ENCODE measurements at regions of chr17 and their contacts with region 1.

Region 1: GRCh38 chr17:39872751-39873150 is 4.7 kb downstream of the ZPBP2 start:
- DNase-seq: peak; percentile 5
- H3K4me3 ChIP-seq: no peak overlapping the region
- CTCF ChIP-seq: no peak

Region 2: DNA sequence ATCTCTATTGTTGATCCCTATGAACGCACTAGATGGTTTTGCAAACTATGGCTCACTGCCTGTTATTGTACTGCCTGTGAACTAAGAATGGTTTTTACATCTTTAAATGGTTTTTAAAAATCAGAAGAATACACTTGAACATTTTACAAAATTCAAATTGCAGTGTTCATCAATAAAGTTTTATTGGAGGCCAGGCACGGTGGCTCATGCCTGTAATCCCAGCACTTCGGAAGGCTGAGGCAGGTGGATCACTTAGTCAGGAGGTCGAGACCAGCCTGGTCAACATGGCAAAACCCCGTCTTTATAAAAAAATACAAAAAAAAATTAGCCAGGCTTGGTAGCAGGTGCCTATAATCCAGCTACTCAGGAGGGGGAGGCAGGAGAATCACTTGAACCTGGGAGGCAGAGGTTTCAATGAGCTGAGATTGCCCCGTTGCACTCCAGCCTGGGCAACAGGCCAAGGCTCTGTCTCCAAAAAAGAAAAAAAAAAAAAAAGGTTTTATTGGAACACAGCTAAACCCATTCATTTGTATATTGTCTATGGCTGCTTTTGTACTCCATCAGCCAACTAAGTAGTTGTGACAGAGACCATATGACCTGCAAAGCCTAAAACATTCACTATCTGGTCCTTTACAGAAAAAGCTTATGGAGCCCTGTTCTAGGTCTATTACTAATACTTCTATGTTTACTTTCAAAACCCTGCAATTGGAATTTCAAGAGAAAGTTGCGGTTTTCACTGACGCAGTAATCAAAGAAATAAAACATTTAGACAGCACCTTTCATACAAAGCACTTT is 27.5 kb before region 1 on chr17:
- CTCF ChIA-PET with region 1: interaction called, 10 read pairs
- POLR2A ChIA-PET with region 1: no interaction called
- DNase-seq: no peak
- H3K4me3 ChIP-seq: no peak overlapping the region
- CTCF ChIP-seq: no peak

Region 3: DNA sequence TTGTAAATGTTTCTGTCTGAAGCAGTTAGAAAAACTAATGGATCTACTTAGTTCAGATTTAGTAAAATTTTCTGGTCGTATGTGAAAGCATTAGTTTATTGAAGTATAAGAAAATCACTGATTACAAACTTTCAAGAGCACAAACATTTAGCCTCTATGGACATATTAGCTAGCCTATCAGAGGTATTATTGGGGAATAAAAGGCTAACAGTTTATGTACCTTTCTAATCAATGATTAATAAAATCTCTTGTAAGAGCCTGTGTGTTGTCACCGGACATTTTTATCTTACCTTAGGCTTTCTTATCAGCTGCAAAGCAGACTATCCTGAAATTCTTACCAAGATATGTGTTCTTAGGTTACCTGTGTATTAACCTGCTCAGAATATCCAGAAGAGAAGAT is 16.4 kb after region 1 on chr17:
- CTCF ChIA-PET with region 1: interaction called, 24 read pairs
- POLR2A ChIA-PET with region 1: no interaction called
- DNase-seq: no peak
- H3K4me3 ChIP-seq: no peak overlapping the region
- CTCF ChIP-seq: no peak

Region 4: DNA sequence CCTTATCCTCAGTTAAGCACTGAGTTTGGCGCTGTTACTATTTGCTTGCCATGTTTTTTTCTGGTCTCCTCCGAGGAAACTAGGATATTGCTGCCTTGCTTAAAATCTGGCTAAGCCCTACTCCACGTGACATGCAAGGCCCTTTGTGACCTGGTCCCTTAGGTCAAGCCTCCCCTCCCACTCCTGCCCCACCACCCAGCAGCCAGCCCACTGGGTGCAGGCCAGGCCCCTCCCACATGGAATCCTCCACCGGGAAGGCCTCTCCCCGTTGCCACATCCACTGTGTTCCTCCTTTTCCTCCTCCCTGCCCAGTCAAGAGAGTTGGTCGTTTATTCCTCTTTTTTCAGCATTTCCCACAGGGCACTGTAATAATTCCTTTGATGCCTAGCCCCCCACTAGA is 124.0 kb after region 1 on chr17:
- CTCF ChIA-PET with region 1: no interaction called
- POLR2A ChIA-PET with region 1: no interaction called
- DNase-seq: no peak
- H3K4me3 ChIP-seq: no peak overlapping the region
- CTCF ChIP-seq: no peak